ENCODE measurements at regions of chr17 and their contacts with region 1.

Region 1: DNA sequence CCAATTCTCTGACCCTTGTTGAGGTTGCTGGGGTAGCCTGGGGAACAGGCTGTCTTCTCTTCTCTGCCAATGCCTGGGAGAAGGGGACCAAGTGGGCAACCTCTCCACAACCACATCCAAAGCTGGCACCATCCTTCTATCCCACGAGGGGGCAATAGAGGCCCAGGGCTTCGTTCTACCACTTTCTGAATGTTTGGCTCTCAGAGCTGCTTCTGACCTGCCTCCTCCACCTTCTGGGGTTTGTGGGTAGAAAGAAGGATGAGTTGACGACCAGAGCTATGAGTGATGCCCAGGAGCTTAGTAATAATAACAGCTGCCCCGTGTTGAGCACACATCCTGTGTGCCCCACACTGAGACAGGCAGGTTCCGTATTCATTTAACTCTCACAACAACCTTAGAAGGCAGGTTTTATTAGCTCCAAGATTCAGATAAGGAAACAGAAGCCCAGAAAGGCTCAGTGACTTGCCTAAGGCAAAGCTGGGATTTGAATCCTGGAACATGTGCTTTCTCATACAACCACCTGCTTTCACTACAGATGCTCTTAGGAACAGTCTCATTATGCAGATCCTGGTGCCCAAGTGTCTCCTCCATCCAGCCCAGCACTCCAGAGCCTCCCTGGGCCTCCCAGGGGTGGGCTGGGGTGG is 11.1 kb downstream of the TSPOAP1 start:
- DNase-seq: peak; percentile 77 to 92
- ATAC-seq: peak; percentile 80 to 94
- H3K4me3 ChIP-seq: no peak overlapping the region
- H3K27ac ChIP-seq: peak overlapping the region; percentile 5 to 24; a peak in 1 of 6 replicates
- H3K4me1 ChIP-seq: peaks cover 6% of the 10 kb centered on the region; the same call in 2 of the 3 replicates
- CTCF ChIP-seq: peak; percentile 96
- EP300 ChIP-seq: no peak
- POLR2A ChIP-seq: no peak
- RAD21 ChIP-seq: peak; percentile 98

Region 2: DNA sequence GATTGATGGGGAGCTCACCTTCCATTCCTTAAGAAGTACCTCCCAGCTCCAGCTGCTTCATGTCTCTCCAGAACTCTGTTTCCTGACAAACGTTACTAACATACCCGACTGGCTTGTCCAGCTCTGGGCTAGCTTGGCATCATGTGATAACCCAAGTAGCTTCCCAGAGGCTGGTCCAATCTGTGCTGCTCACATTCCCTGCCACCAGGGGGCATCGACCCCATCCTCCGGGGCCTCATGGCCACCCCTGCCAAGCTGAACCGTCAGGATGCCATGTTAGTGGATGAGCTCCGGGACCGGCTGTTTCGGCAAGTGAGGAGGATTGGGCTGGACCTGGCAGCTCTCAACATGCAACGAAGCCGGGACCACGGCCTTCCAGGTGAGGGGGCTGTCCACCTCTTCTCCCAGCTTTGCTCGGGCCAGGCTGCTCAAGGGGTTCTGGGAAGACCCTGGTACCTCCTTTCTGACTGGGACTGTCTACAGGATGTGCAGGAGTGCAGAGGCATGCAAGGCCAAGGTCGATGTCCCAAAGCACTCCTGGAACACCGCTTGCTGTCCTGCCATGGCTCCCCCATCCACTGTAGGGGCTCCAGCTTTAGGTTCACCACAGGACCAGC is 117.4 kb before region 1 on chr17:
- CTCF ChIA-PET with region 1: interaction called, 12 read pairs
- POLR2A ChIA-PET with region 1: no interaction called
- DNase-seq: peak; percentile 80 to 89
- ATAC-seq: peak; percentile 86 to 98
- H3K4me3 ChIP-seq: no peak overlapping the region
- H3K27ac ChIP-seq: 0 out of 6 replicates have a peak overlapping the region, but pooled peaks of 1 of the 2 experiments have one; percentile 23
- H3K4me1 ChIP-seq: no peaks in the 10 kb centered on the region
- CTCF ChIP-seq: peak; percentile 64
- EP300 ChIP-seq: no peak
- POLR2A ChIP-seq: no peak
- RAD21 ChIP-seq: peak in 1 of 2 experiments; percentile 57; a peak in 3 of 5 replicates

Region 3: GRCh38 chr17:58291246-58291645 is 26.3 kb before region 1 on chr17:
- CTCF ChIA-PET with region 1: interaction called, 13 read pairs
- POLR2A ChIA-PET with region 1: no interaction called
- DNase-seq: no peak
- ATAC-seq: no peak
- H3K4me3 ChIP-seq: no peak overlapping the region
- H3K27ac ChIP-seq: no peak overlapping the region
- H3K4me1 ChIP-seq: no peaks in the 10 kb centered on the region; the same call in 2 of the 3 replicates
- CTCF ChIP-seq: no peak
- EP300 ChIP-seq: no peak
- POLR2A ChIP-seq: no peak
- RAD21 ChIP-seq: no peak

Region 4: DNA sequence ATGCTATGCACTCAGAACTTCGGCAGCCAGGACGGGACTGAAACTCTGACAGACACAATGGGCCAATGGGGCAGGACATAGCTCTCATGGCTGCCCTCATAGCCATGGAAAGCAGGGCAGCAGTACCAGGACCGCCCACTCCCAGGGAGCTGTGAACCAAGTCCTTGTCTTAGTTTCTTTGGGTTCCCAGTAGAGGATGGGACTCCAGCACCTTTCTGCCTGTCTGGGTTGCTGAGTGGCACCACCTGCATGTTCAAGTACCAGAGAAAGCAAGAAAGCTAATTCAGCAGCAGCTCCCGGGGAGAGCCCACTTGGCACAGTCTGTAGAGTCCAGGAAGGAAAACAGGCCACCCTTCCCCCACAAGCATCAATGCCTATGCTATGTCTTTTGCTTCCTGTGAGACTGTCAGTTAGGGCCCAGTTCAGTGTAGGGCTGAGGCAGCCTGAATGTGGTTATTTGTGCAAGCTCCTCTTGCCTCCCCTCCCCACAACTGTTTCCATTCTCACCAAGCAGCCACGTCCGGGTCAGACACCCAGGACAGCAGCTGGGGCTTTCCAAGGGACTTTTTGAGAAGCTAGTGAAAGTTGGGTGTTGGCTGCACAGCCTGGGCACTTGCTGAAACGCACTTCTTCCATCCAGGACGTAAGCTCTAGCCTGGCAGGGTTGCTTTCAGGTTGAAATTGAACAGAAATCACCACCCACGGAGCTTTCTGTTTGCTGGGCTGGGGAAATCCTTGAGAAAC is 26.7 kb after region 1 on chr17:
- CTCF ChIA-PET with region 1: interaction called, 28 read pairs
- POLR2A ChIA-PET with region 1: no interaction called
- DNase-seq: no peak
- ATAC-seq: peak; percentile 20 to 37; a peak in 3 of 6 replicates
- H3K4me3 ChIP-seq: no peak overlapping the region
- H3K27ac ChIP-seq: no peak overlapping the region
- H3K4me1 ChIP-seq: no peaks in the 10 kb centered on the region
- CTCF ChIP-seq: no peak
- EP300 ChIP-seq: no peak
- POLR2A ChIP-seq: no peak
- RAD21 ChIP-seq: no peak

Region 5: GRCh38 chr17:58382108-58382871 is 64.7 kb after region 1 on chr17:
- CTCF ChIA-PET with region 1: interaction called, 16 read pairs
- POLR2A ChIA-PET with region 1: no interaction called
- DNase-seq: no peak
- ATAC-seq: peak; percentile 15 to 31; a peak in 2 of 6 replicates
- H3K4me3 ChIP-seq: no peak overlapping the region
- H3K27ac ChIP-seq: peak overlapping the region; percentile 70 to 73
- H3K4me1 ChIP-seq: peaks cover 74% of the 10 kb centered on the region
- CTCF ChIP-seq: no peak
- EP300 ChIP-seq: no peak
- POLR2A ChIP-seq: no peak
- RAD21 ChIP-seq: no peak

Region 6: DNA sequence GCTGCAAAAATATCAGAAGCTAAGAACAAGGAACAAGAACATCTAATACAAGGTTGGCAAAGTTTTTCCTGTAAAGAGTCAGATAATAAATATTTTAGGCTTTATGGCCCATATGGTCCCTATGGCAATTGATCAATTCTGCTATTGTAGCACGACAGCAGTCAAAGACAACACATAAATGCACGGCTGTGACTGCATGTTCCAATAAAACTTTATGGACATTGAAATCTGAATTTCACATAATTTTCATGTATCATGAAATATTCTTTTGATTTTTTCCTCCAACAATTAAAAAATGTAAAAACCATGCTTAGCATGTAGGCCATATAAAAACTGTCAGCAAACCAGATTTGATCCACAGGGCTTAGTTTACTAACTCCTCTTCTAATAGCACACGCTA is 110.3 kb after region 1 on chr17:
- CTCF ChIA-PET with region 1: interaction called, 80 read pairs
- POLR2A ChIA-PET with region 1: no interaction called
- DNase-seq: no peak
- ATAC-seq: no peak
- H3K4me3 ChIP-seq: no peak overlapping the region
- H3K27ac ChIP-seq: no peak overlapping the region
- H3K4me1 ChIP-seq: no peaks in the 10 kb centered on the region
- CTCF ChIP-seq: no peak
- EP300 ChIP-seq: no peak
- POLR2A ChIP-seq: no peak
- RAD21 ChIP-seq: no peak

Region 7: DNA sequence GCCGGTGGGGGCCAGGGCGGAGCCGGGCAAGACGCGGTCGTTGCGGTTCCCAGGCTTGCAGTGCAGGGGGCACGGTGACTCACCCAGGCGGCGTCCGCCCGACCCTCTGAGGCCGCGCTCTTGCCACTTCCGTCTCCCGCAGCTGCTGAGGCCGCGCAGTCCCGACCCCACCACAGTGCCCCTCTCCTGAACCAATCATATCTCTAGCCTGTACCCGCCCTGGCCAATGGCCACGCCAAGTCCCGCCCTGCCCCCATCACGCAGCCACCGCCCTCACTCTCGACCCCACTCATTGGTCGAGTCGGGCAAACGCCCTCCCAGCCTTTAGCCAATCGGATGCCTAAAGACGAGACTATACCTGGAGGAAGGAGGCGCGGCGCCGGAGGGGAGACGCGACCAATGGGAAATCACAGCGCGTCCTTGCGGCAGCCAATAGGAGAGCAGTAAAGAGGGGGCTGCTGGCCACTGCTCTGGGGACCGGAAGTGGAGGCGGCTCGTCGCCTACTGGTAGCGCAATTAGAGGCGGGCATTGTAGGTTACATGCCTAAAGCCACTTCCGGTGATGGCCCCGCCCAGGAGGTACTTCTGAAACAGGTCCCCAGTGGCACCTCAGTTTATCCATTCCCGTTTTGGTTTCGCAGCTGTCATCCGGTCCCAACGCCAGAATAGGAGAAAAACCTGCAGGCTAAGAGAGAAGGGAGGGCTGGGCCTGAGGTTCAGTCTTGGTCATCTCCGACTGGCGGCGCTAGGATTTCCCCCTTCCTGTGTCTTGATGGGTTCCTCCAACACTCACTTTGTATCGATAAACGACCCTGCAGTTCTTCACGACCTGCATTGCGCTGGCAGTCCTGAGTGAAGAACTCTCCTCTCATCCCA is 200.4 kb after region 1 on chr17:
- CTCF ChIA-PET with region 1: interaction called, 12 read pairs
- POLR2A ChIA-PET with region 1: no interaction called
- DNase-seq: peak; percentile 100
- ATAC-seq: peak; percentile 84 to 90
- H3K4me3 ChIP-seq: peak overlapping the region; percentile 72
- H3K27ac ChIP-seq: peak overlapping the region; percentile 76 to 87
- H3K4me1 ChIP-seq: peaks cover 15% of the 10 kb centered on the region
- CTCF ChIP-seq: no peak
- EP300 ChIP-seq: no peak
- POLR2A ChIP-seq: peak; percentile 48
- RAD21 ChIP-seq: no peak